ENCODE measurements at regions of chr1 and their contacts with region 1.

Region 1: DNA sequence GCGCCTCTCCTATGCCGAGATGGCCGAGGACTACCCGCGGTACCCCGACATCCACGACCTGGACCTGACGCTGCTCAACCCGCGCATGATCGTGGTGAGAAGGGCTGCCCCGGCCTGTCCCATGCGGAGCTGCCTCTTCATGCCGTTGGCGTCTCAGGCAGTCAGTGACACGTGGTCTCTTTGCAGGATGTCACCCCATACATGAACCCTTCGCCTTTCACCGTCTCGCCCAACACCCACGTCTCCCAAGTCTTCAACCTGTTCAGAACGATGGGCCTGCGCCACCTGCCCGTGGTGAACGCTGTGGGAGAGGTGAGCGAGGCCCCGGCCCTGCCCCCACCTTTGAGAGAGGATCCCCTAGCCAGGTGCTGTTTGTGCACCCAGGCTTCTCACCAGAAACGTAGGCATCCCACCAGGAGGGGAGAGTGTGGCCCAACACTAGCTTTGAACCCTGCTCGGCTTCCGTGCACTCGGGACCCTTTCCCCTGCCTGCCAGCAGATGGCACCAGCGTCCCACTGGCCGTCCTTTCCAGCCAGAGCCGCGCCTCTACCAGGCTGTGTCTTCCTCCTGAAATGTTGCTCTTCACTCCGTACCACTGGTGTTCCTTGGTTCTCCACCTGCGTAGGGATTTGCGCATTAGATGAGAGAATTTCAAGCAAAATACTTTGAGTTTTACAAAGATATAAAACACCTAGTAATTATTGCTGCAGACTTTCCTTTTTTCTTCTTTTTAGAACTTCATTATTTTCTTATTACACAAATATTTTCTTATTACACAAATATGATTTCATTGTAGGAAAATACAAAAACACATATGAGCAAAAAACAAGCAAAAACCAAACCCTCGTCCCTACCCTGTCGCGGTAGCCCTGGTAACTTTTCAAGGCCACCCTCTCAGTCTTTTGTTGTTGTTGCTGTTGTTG is 9.0 kb downstream of the NPPA start:
- DNase-seq: peak; percentile 51
- H3K4me3 ChIP-seq: no peak overlapping the region
- H3K27ac ChIP-seq: no peak overlapping the region
- H3K4me1 ChIP-seq: peaks cover 7% of the 10 kb centered on the region
- H3K27me3 ChIP-seq: no peaks in the 10 kb centered on the region
- CTCF ChIP-seq: peak; percentile 97 to 100
- POLR2A ChIP-seq: no peak

Region 2: DNA sequence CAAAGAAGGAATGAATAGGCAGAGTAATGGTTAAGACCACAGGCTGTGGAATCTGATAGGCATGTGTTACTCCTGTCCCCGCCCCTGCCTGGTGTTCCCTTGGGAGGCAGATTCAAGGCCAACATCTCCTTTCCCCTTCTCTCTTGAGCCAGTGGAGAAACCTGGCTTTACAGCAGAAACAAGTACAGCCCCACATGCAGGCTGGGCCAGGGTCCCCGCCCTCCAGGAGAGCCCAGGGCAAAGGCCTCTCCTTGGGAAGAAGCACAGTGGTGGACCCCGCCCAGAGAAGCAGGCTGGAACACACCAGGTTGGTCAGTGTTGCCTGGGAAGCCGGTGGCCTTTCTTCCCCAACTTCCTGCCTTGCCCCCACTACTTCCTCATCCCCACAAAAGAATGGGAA is 69.8 kb before region 1 on chr1:
- CTCF ChIA-PET with region 1: no interaction called
- POLR2A ChIA-PET with region 1: no interaction called
- dilution Hi-C with region 1: no loop called
- intact Hi-C with region 1: no loop called
- DNase-seq: peak; percentile 8
- H3K4me3 ChIP-seq: no peak overlapping the region
- H3K27ac ChIP-seq: no peak overlapping the region
- H3K4me1 ChIP-seq: peaks cover 4% of the 10 kb centered on the region
- H3K27me3 ChIP-seq: no peaks in the 10 kb centered on the region
- CTCF ChIP-seq: no peak
- POLR2A ChIP-seq: no peak

Region 3: DNA sequence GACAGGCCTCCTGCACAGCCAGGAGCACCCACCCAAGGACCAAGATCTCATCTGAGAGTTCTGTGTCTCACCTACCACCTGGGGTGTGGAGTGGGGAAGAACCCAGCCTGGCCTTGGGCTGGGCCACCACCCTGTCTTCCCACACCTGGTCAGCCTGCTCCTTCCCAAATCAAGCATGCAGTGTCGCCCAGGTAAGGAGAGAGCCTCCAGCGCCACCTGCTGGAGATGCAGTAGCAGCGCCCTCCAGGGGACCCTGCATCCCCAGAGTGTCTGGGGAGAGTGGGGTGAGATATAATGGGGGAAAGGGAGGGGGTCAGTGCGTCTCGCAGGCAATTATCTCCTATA is 55.3 kb after region 1 on chr1:
- CTCF ChIA-PET with region 1: interaction called, 42 read pairs
- POLR2A ChIA-PET with region 1: interaction called, 3 read pairs
- dilution Hi-C with region 1: no loop called
- intact Hi-C with region 1: loop called (anchors 1 kb)
- DNase-seq: peak; percentile 38
- H3K4me3 ChIP-seq: no peak overlapping the region
- H3K27ac ChIP-seq: no peak overlapping the region
- H3K4me1 ChIP-seq: no peaks in the 10 kb centered on the region
- H3K27me3 ChIP-seq: peaks cover 7 to 9% of the 10 kb centered on the region in 2 experiments
- CTCF ChIP-seq: peak; percentile 88 to 95
- POLR2A ChIP-seq: no peak

Region 4: GRCh38 chr1:11967028-11967547 is 128.5 kb after region 1 on chr1:
- CTCF ChIA-PET with region 1: interaction called, 12 read pairs
- POLR2A ChIA-PET with region 1: no interaction called
- dilution Hi-C with region 1: no loop called
- intact Hi-C with region 1: loop called (anchors 2 kb)
- DNase-seq: peak; percentile 37
- H3K4me3 ChIP-seq: no peak overlapping the region
- H3K27ac ChIP-seq: no peak overlapping the region
- H3K4me1 ChIP-seq: no peaks in the 10 kb centered on the region
- H3K27me3 ChIP-seq: no peaks in the 10 kb centered on the region
- CTCF ChIP-seq: peak; percentile 25 to 50
- POLR2A ChIP-seq: no peak

Region 5: GRCh38 chr1:12031039-12031980 is 192.7 kb after region 1 on chr1:
- CTCF ChIA-PET with region 1: interaction called, 11 read pairs
- POLR2A ChIA-PET with region 1: no interaction called
- dilution Hi-C with region 1: no loop called
- intact Hi-C with region 1: no loop called
- DNase-seq: peak; percentile 16
- H3K4me3 ChIP-seq: no peak overlapping the region
- H3K27ac ChIP-seq: no peak overlapping the region
- H3K4me1 ChIP-seq: no peaks in the 10 kb centered on the region
- H3K27me3 ChIP-seq: no peaks in the 10 kb centered on the region
- CTCF ChIP-seq: peak; percentile 45 to 70
- POLR2A ChIP-seq: no peak

Measured in endothelial cell of umbilical vein (primary cell).